ENCODE measurements at regions of chr2 and their contacts with region 1.

Region 1: GRCh38 chr2:207625018-207625907 is at the start of gene METTL21A:
- DNase-seq: peak; percentile 88 to 99 (median 95)
- ATAC-seq: peak; percentile 82
- H3K4me3 ChIP-seq: peak within 1 kb of the TSS; percentile 91 to 97
- H3K4me3 Mint-ChIP-seq: peak within 1 kb of the TSS; percentile 96
- H3K27ac ChIP-seq: peak within 1 kb of the TSS; percentile 95 to 97
- H3K27ac Mint-ChIP-seq: peak within 1 kb of the TSS; percentile 96
- H3K4me1 ChIP-seq: peaks cover 18% of the 10 kb centered on the region
- H3K4me1 Mint-ChIP-seq: peaks cover 43% of the 10 kb centered on the region
- H3K27me3 ChIP-seq: no peaks in the 10 kb centered on the region
- H3K27me3 Mint-ChIP-seq: no peaks in the 10 kb centered on the region
- CTCF ChIP-seq: peak; percentile 49
- total RNA-seq, gene METTL21A: 12.3 to 12.4 TPM

Region 2: DNA sequence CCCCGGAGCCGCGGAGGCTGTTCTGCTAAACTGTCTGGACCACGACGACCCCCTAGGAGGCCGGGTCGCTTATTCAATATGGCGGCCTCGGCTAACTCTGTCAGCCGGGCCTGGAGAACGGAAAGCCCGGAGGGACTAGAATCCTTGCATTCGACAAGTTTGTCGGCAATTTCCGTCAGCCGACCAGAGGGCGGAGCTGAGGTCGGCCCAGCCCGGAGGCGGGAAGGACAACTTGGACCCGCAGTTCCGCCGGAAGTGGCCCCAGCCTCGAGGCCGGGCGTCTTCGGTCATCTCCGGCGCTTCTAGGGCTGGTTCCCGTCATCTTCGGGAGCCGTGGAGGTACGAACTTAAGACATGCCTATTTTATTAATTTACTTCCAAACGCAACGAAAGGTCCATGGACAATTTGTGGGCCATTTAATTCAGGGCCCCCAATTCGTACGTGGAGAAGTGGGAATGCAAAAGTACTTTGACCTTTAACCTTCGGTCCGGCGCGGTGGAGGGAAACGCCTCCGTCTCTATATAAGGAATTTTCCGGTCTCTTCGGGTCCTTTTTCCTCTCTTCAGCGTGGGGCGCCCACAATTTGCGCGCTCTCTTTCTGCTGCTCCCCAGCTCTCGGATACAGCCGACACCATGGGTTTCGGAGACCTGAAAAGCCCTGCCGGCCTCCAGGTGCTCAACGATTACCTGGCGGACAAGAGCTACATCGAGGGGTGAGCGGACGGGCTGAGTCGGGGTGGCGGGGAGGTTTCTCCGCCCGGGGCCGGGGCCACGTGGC is 1465.7 kb before region 1 on chr2 and contains the starts of genes EEF1B2 and NDUFS1:
- CTCF ChIA-PET with region 1: no interaction called
- POLR2A ChIA-PET with region 1: no interaction called
- intact Hi-C with region 1: loop called in 1 of 2 experiments (anchors 2 kb)
- DNase-seq: peak; percentile 95 to 99 (median 96)
- ATAC-seq: peak; percentile 85
- H3K4me3 ChIP-seq: peak within 1 kb of the TSS; percentile 73 to 93
- H3K4me3 Mint-ChIP-seq: peak within 1 kb of the TSS; percentile 99
- H3K27ac ChIP-seq: peak within 1 kb of the TSS; percentile 81 to 91
- H3K27ac Mint-ChIP-seq: peak within 1 kb of the TSS; percentile 100
- H3K4me1 ChIP-seq: peaks cover 30% of the 10 kb centered on the region
- H3K4me1 Mint-ChIP-seq: peaks cover 59% of the 10 kb centered on the region
- H3K27me3 ChIP-seq: no peaks in the 10 kb centered on the region
- H3K27me3 Mint-ChIP-seq: no peaks in the 10 kb centered on the region
- CTCF ChIP-seq: no peak
- total RNA-seq, gene EEF1B2: 1,147 to 1,208 TPM
- total RNA-seq, gene NDUFS1: 23.7 to 28.7 TPM

Region 3: GRCh38 chr2:207529330-207530159 is 95.7 kb before region 1 on chr2 and contains the start of gene CREB1:
- CTCF ChIA-PET with region 1: interaction called, 10 read pairs
- POLR2A ChIA-PET with region 1: interaction called, 87 read pairs
- intact Hi-C with region 1: loop called (anchors 1 kb)
- DNase-seq: peak; percentile 99 to 100 (median 100)
- ATAC-seq: peak; percentile 80
- H3K4me3 ChIP-seq: peak within 1 kb of the TSS; percentile 73 to 82
- H3K4me3 Mint-ChIP-seq: peak within 1 kb of the TSS; percentile 90
- H3K27ac ChIP-seq: peak within 1 kb of the TSS; percentile 97 to 99
- H3K27ac Mint-ChIP-seq: peak within 1 kb of the TSS; percentile 98
- H3K4me1 ChIP-seq: peaks cover 59% of the 10 kb centered on the region
- H3K4me1 Mint-ChIP-seq: peaks cover 70% of the 10 kb centered on the region
- H3K27me3 ChIP-seq: no peaks in the 10 kb centered on the region
- H3K27me3 Mint-ChIP-seq: no peaks in the 10 kb centered on the region
- CTCF ChIP-seq: no peak
- total RNA-seq, gene CREB1: 43.9 to 51.4 TPM

Region 4: DNA sequence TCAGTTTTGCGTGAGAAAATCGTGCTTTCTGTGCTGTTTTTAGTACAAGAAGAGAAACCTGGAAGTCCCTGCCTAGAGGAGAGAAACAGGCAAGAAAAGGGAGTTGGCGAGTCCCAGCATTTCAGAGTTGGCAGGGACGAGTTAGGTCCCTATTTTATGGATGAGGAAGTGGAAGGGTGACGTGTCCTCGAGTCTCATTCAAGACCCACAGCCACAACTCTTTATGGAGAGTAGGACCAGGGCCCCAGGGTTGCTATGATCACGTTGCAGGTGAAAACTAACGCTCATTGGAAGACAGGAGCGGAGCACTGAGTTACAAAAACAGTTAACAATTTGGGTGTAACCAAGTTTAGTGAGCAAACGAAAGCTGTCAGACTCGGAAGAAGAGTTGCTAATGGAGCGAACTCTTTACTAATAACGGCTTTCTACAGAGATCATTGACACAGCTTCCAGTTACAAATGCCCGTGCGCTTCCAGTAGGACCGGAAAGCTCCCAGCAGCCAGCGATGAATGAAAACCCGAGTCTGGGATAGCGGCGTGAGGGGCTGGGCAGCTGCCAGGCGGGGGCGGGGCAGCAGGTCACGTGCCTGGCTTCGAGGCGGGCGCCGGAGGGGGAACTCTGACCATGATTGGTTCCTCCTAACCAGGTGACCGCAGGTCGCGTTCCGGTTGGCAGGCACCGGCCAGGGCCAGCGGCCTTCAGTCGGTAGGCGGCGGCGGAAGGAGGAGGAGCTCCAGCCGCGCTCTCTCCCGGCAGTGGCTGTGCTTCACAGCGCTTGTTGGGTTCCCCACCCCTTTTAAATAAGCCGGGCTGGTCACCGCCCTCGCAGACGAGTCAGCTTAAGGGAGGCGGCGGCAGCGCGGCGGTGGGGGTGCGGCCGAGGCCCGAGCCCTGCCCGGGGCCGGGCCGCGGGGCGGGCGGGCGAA is 85.8 kb after region 1 on chr2 and contains the start of gene CCNYL1:
- CTCF ChIA-PET with region 1: interaction called, 8 read pairs
- POLR2A ChIA-PET with region 1: interaction called, 30 read pairs
- intact Hi-C with region 1: loop called (anchors 1 kb)
- DNase-seq: peak; percentile 95 to 99 (median 97)
- ATAC-seq: peak; percentile 96
- H3K4me3 ChIP-seq: peak within 1 kb of the TSS; percentile 87 to 97
- H3K4me3 Mint-ChIP-seq: peak within 1 kb of the TSS; percentile 91
- H3K27ac ChIP-seq: peak within 1 kb of the TSS; percentile 69 to 71
- H3K27ac Mint-ChIP-seq: peak within 1 kb of the TSS; percentile 86
- H3K4me1 ChIP-seq: peaks cover 19% of the 10 kb centered on the region
- H3K4me1 Mint-ChIP-seq: peaks cover 22% of the 10 kb centered on the region
- H3K27me3 ChIP-seq: no peaks in the 10 kb centered on the region
- H3K27me3 Mint-ChIP-seq: no peaks in the 10 kb centered on the region
- CTCF ChIP-seq: no peak
- total RNA-seq, gene CCNYL1: 12.0 to 12.3 TPM

Region 5: DNA sequence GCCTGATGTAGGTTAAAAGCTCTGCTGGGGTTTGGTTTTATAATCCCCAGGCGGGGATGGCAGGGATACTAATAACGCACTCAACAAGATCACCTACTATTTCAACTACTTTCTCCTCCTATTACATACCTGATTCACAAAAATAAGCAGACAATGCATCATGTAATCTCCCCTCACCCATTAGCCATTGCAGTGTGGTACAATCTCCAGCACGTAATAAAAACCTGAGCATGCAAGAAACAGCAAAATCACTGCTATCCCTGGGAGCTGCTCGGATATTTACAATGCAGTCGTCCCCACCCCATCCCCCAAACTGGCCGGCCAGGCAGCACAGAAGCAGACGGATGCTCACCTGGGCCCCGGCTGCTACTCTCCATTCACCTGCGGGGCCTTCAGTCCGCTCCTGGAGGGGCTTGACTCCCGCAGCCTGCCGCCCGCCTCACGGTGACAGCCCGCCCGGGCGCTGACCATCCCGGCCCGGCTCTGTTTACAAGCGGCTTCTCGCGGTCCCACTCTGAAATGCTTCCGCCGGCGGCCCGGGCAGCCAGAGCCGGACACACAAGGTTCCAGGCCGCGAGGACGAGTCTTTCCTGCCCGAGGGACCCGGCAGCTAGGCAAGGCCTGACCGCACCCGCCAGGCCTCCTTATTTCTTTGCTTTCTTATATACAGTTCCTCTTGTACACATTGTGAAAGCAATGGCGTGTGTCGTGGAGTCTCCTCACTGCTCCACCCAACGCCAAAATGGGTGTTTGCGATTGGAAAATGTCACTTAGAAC is 400.0 kb after region 1 on chr2 and contains the start of gene PLEKHM3:
- CTCF ChIA-PET with region 1: interaction called, 7 read pairs
- POLR2A ChIA-PET with region 1: interaction called, 9 read pairs
- intact Hi-C with region 1: loop called in 1 of 2 experiments (anchors 1 kb)
- DNase-seq: peak; percentile 53 to 90 (median 71)
- ATAC-seq: peak; percentile 76
- H3K4me3 ChIP-seq: peak within 1 kb of the TSS; percentile 79 to 80
- H3K4me3 Mint-ChIP-seq: peak within 1 kb of the TSS; percentile 98
- H3K27ac ChIP-seq: peak within 1 kb of the TSS; percentile 64 to 67
- H3K27ac Mint-ChIP-seq: peak within 1 kb of the TSS; percentile 95
- H3K4me1 ChIP-seq: peaks cover 6% of the 10 kb centered on the region
- H3K4me1 Mint-ChIP-seq: peaks cover 30% of the 10 kb centered on the region
- H3K27me3 ChIP-seq: no peaks in the 10 kb centered on the region
- H3K27me3 Mint-ChIP-seq: no peaks in the 10 kb centered on the region
- CTCF ChIP-seq: no peak
- total RNA-seq, gene PLEKHM3: 10.9 to 11.3 TPM

Region 6: DNA sequence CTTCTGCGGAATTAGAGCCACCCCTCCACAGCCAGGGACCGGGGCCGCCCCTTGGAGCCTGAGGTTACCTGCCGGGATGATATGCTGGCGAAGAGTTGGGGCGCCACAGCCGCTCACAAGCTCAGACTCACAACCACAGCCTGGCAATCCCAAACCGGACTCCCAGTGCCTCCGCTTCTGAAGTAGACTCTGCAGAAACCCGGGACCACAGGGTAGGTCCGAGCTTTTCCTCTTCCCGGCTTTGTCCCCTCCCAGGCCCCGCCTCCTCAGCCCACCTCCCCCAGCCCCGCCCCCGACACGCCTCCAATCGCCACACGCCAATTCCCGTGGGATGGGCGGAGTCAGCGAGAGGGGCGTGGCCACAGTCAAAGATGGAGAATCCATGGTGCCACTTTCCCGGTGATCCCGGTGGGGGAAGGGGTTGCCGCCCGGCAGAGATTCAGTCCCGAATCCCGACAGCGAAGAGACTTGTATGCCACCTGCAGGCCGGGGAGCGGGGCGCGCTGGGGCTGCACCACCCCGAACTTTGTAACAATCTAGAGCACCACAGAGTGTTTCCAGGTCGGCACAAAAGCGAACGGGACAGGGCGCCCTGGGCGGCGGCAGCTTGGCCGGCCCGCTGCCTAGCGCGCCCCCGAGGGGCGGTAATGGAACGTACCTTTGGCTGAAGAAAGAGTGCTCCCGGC is 629.8 kb after region 1 on chr2 and contains the start of gene IDH1:
- CTCF ChIA-PET with region 1: no interaction called
- POLR2A ChIA-PET with region 1: no interaction called
- intact Hi-C with region 1: loop called (anchors 2 to 5 kb)
- DNase-seq: peak; percentile 83 to 97 (median 93)
- ATAC-seq: peak; percentile 85
- H3K4me3 ChIP-seq: peak within 1 kb of the TSS; percentile 99
- H3K4me3 Mint-ChIP-seq: peak within 1 kb of the TSS; percentile 94
- H3K27ac ChIP-seq: peak within 1 kb of the TSS; percentile 31 to 51
- H3K27ac Mint-ChIP-seq: peak within 1 kb of the TSS; percentile 83
- H3K4me1 ChIP-seq: peaks cover 13% of the 10 kb centered on the region
- H3K4me1 Mint-ChIP-seq: peaks cover 31% of the 10 kb centered on the region
- H3K27me3 ChIP-seq: no peaks in the 10 kb centered on the region
- H3K27me3 Mint-ChIP-seq: no peaks in the 10 kb centered on the region
- CTCF ChIP-seq: no peak
- total RNA-seq, gene IDH1: 3.0 to 4.0 TPM

Measured in CD8-positive, alpha-beta T cell (primary cell).